A549 (cell line): ENCODE measurements at regions of chr19 and their contacts with region 1.

Region 1: DNA sequence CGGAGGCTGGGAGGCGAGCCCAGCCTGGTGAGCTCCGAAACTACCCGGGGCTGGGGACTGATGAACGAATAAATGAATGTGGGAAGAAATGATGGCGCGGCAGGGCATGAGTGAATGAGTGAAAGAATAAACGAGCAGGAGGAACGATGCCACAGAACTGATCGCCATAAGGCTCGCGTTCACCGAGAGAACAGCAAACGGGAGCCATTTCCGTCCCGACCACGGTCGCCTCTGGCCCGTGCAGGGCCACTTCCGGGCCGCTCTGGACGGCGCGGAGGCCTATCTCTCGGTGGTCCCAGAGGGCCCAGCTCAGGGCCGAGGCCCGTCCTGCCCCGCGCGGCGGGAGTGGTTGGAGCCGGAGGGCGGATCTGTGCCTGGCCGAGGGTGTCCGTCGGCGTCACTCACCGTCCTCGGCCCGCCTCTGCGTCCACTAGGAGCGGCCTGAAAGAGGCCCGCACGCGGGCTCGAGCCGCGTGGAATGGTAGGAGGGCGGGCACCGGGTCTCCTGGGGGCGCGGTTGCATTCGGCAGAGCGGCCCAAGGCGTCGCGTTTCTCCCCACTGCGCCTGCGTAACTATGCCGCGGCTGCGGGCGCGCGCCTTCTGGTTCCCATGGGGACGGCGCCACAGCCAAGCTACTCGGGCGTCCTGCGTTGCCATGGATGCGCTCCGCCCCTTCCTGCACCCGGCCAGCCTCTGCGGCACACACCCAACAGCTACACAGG is at the start of gene ZNF497:
- DNase-seq: peak; percentile 99 to 100
- ATAC-seq: peak; percentile 89 to 95
- H3K4me3 ChIP-seq: peak within 1 kb of the TSS; percentile 58
- H3K27ac ChIP-seq: peak within 1 kb of the TSS; percentile 82 to 88
- H3K4me1 ChIP-seq: peaks cover 7% of the 10 kb centered on the region; the same call in 1 of the 3 replicates
- CTCF ChIP-seq: no peak
- EP300 ChIP-seq: no peak
- POLR2A ChIP-seq: peak; percentile 63
- RAD21 ChIP-seq: no peak
- polyA plus RNA-seq, gene ZNF497: 1.1 and 1.4 TPM in 2 replicates

Region 2: GRCh38 chr19:58203814-58204475 is 158.5 kb before region 1 on chr19:
- CTCF ChIA-PET with region 1: no interaction called
- POLR2A ChIA-PET with region 1: no interaction called
- DNase-seq: no peak
- ATAC-seq: no peak; a peak in 2 of 6 replicates
- H3K4me3 ChIP-seq: no peak overlapping the region
- H3K27ac ChIP-seq: no peak overlapping the region
- H3K4me1 ChIP-seq: no peaks in the 10 kb centered on the region
- CTCF ChIP-seq: no peak
- EP300 ChIP-seq: no peak
- POLR2A ChIP-seq: no peak
- RAD21 ChIP-seq: no peak

Region 3: DNA sequence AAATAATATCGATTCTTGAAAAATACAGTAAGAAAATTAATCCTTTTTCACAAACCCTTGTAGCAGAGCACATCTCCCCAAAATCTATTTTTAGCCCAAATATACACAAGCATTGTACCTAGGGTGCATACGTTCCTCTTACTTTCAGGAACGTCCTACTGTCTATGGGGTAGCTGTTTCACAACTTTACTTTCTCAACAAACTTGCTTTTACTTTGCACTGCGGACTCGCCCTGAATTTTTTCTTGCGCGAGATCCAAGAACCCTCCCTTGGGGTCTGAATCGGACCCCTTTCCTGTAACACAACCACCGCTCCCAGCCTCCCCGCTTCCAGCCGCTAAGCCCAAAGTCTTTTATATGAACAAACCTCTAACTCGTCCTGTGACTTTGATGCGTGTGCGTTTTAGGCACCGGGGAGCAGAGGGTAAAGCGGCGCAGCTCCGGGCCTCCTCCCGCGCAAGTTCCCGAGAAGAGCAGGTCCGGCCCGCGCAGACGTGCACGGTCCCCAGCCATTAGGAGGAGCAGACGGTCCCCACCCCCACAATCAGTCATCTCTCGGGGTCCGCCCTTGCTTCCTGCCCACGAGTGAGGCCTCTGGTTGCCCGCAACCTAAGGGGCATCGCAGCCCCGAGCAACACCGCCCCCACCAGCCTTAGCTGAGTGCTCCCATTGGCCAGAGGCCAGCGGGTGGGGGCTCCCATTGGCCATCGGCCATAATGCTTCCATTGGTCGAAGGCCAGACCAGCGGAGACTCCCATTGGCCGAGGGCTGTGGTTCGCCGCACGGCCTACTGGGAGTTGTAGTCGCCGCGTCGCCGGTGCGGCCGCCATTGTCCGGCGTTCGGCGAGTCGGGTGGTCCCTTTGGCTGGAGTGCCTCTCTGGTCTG is 84.0 kb before region 1 on chr19 and contains the start of gene ZNF8:
- CTCF ChIA-PET with region 1: no interaction called
- POLR2A ChIA-PET with region 1: interaction called, 15 read pairs
- DNase-seq: peak; percentile 100
- ATAC-seq: peak; percentile 97 to 98
- H3K4me3 ChIP-seq: peak within 1 kb of the TSS; percentile 85
- H3K27ac ChIP-seq: peak within 1 kb of the TSS; percentile 89 to 92
- H3K4me1 ChIP-seq: no peaks in the 10 kb centered on the region
- CTCF ChIP-seq: no peak
- EP300 ChIP-seq: no peak
- POLR2A ChIP-seq: peak; percentile 71
- RAD21 ChIP-seq: 0 out of 5 replicates have a peak, but pooled peaks of 1 of the 2 experiments have one; percentile 10
- polyA plus RNA-seq, gene ZNF8: 4.0 and 5.6 TPM in 2 replicates

Region 4: GRCh38 chr19:58317476-58318072 is 44.9 kb before region 1 on chr19:
- CTCF ChIA-PET with region 1: no interaction called
- POLR2A ChIA-PET with region 1: interaction called, 10 read pairs
- DNase-seq: peak in 1 of 2 experiments; percentile 51
- ATAC-seq: peak; percentile 40 to 58; a peak in 4 of 6 replicates
- H3K4me3 ChIP-seq: no peak overlapping the region
- H3K27ac ChIP-seq: no peak overlapping the region
- H3K4me1 ChIP-seq: no peaks in the 10 kb centered on the region
- CTCF ChIP-seq: no peak
- EP300 ChIP-seq: no peak
- POLR2A ChIP-seq: no peak
- RAD21 ChIP-seq: no peak

Region 5: DNA sequence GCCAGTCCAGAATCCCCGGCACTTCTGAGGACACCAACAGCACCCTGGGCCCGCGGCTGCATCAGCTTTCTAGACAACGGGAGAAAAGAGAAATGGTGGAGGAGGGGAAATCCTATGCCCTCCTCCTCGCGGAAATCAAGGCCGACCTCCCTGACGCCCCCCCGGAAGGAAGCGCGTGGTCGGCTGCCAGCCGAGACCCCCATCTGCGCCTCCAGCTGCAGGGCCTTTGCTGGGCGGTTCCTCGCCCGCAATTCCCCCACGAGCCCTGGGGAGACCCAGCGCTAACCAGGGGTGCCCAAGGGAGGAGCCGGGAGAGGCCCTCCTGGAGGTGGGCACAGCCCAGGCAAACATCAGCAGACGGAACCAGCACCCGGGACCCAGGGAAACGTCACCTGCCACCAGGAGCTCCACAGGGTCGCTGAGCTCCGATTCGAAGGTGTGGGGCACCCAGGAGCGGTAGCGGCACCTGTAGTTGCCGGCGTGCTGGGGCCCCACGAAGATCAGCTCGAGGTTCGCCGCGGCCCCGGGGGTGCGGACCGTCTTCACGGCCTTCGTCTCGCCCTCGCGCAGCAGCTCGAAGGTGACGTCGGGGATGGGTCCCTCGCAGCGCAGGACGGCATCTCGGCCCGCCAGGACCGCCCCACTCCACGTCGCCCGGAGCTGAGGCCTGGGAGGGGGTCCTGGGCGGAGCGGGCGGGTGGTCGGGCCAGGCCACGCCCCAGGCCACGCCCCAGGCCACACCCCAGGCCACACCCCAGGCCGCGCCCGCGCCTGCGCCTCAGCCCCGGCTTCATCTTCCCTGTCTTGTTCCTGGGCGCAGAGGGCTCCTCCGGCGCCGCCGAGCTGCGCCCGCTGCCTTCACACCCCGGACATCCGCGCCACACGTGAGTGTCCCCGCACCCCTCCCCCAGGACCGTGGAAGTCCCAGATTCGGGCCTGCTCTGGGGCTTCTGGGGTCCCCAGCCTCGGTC is 15.2 kb before region 1 on chr19:
- CTCF ChIA-PET with region 1: interaction called, 5 read pairs
- POLR2A ChIA-PET with region 1: interaction called, 33 read pairs
- DNase-seq: peak; percentile 65 to 78
- ATAC-seq: peak; percentile 87 to 95
- H3K4me3 ChIP-seq: peak overlapping the region; percentile 53
- H3K27ac ChIP-seq: peak overlapping the region; percentile 52 to 82
- H3K4me1 ChIP-seq: 0 out of 3 replicates have a peak, but pooled peaks cover 8% of the 10 kb centered on the region
- CTCF ChIP-seq: no peak
- EP300 ChIP-seq: no peak
- POLR2A ChIP-seq: peak; percentile 40
- RAD21 ChIP-seq: no peak

Region 6: DNA sequence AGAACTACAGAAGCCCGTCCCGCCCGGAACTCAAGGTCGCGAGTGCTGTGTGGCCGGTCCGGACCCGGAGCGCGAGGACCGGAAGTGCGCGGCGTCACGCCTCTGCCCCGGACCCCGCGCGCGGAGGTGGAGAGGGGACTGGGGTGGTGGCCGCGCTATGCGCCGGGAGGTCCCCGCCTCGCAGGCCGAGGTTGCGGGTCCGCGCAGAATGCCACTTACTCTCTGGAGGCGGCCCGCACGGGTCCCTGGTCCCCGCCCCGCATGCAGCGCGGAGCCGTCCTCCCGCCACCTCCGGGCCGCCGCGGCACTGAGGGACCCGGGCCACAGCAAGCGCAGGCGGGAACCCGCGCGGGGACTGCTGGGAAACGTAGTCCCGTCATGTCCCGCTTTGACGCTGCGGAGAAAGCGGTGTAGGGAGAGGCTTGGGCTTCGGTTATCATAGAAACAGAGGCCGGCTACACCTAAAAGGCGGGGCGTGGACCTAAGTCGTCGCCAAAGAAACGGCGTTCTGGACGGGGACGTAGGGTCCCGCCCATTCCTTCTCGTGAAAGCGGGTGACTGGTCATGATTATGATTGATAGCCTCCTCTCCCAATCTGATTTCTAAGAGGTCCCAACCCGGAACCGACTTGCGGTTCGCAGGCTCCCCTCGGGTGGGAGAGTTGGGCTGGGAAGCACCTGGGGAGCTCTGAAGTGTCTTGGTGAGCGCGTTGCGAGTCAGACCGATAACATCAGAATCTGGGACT is 18.5 kb after region 1 on chr19 and contains the start of gene ZNF837:
- CTCF ChIA-PET with region 1: interaction called, 6 read pairs
- POLR2A ChIA-PET with region 1: interaction called, 43 read pairs
- DNase-seq: peak; percentile 99 to 100
- ATAC-seq: peak; percentile 87 to 93
- H3K4me3 ChIP-seq: peak within 1 kb of the TSS; percentile 64
- H3K27ac ChIP-seq: peak within 1 kb of the TSS; percentile 93 to 97
- H3K4me1 ChIP-seq: peaks cover 25% of the 10 kb centered on the region
- CTCF ChIP-seq: no peak
- EP300 ChIP-seq: peak in 1 of 2 experiments; percentile 16; a peak in 1 of 5 replicates
- POLR2A ChIP-seq: peak; percentile 53
- RAD21 ChIP-seq: no peak; a peak in 2 of 5 replicates
- polyA plus RNA-seq, gene ZNF837: 0.70 and 0.74 TPM in 2 replicates

Region 7: GRCh38 chr19:58408152-58409009 is 45.9 kb after region 1 on chr19 and contains the start of gene ZNF584:
- CTCF ChIA-PET with region 1: no interaction called
- POLR2A ChIA-PET with region 1: interaction called, 17 read pairs
- DNase-seq: peak; percentile 95 to 96
- ATAC-seq: peak; percentile 87 to 95
- H3K4me3 ChIP-seq: peak within 1 kb of the TSS; percentile 96
- H3K27ac ChIP-seq: peak within 1 kb of the TSS; percentile 93 to 94
- H3K4me1 ChIP-seq: peaks cover 21% of the 10 kb centered on the region
- CTCF ChIP-seq: peak; percentile 28; the same call in 2 of the 3 replicates
- EP300 ChIP-seq: no peak
- POLR2A ChIP-seq: peak; percentile 93
- RAD21 ChIP-seq: no peak
- polyA plus RNA-seq, gene ZNF584: 18.2 and 21.2 TPM in 2 replicates